Testis (tissue), 5 donors: ENCODE measurements at regions of chr1 and their contacts with region 1.

Region 1: DNA sequence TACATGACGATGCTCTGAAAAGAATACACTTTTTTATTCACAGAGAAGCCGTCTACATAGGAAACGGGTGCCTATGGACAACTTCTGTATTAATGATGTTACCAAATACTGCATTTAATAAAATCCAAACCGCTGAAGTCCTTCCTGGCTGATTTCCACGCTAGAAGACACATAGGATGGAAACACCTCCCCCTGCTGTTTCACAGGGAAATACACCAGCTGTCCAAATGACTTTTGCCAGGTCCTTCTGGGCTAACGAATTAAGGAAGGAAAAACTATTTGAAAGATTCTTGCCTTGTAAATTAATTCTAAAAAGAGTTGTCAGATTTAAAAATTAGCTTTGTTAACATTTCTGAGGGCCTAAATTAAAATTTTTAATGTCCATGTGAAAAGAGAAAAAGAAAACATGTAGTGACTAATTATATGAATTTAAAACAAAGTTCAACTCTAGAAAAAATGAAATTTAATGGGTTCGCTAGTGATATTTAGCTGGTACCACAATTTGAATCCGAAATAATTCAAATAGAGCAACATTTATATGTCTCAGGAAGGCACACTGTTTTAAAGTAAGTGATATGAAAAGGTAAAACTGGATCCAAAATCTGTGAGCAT is 146.0 kb downstream of the RERE start:
- DNase-seq: peak; percentile 60
- H3K4me3 ChIP-seq: no peak overlapping the region
- H3K27ac ChIP-seq: no peak overlapping the region
- H3K4me1 ChIP-seq: peaks cover 18% of the 10 kb centered on the region
- H3K27me3 ChIP-seq: no peaks in the 10 kb centered on the region
- CTCF ChIP-seq: peak; percentile 76 to 83 (median 77)
- POLR2A ChIP-seq: no peak

Region 2: GRCh38 chr1:8560611-8561544 is 110.5 kb before region 1 on chr1:
- intact Hi-C with region 1: loop called (anchors 10 kb)
- DNase-seq: peak; percentile 44
- H3K4me3 ChIP-seq: no peak overlapping the region
- H3K27ac ChIP-seq: no peak overlapping the region
- H3K4me1 ChIP-seq: peaks cover 11% of the 10 kb centered on the region
- H3K27me3 ChIP-seq: no peaks in the 10 kb centered on the region
- CTCF ChIP-seq: peak; percentile 76 to 91 (median 91)
- POLR2A ChIP-seq: no peak

Region 3: DNA sequence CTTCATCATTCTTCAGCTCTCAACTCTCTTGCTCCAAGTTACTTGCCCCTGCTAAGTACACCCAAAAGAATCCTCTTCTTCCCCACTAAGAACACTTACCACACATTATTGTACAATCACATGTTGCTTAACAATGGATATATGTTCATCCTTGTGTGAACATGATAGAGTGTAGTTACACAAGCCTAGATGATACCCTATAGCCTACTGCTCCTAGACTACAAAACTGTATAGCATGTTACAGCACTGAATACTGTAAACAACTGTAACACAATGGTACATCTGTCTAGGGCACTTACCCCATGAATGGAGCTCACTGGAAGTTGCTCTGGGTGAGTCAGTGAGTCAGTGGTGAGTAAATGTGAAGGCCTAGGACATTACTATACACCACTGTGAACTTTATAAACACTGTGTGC is 68.6 kb after region 1 on chr1:
- intact Hi-C with region 1: no loop called
- DNase-seq: no peak
- H3K4me3 ChIP-seq: no peak overlapping the region
- H3K27ac ChIP-seq: no peak overlapping the region
- H3K4me1 ChIP-seq: no peaks in the 10 kb centered on the region
- H3K27me3 ChIP-seq: no peaks in the 10 kb centered on the region
- CTCF ChIP-seq: no peak
- POLR2A ChIP-seq: no peak

Region 4: DNA sequence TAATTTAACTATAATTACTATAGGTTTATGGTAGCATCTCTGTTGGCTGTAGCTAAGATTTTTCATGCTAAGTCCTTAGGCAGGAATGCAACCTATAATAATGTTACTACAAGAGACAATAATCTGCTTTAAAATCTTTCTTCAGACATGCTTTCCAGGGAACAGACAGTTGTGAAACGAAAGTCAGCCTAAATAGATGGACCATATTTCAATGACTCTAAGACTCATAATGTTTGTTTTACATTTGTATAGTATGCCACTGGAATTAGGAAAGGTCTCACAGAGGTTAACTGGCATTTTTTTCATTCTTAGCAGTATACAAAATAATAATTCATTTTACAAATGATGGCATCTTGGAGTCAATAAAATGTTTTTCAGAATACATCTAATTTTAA is 137.9 kb after region 1 on chr1:
- intact Hi-C with region 1: no loop called
- DNase-seq: no peak
- H3K4me3 ChIP-seq: no peak overlapping the region
- H3K27ac ChIP-seq: no peak overlapping the region
- H3K4me1 ChIP-seq: peaks cover 3% of the 10 kb centered on the region
- H3K27me3 ChIP-seq: no peaks in the 10 kb centered on the region
- CTCF ChIP-seq: no peak
- POLR2A ChIP-seq: no peak